ENCODE measurements at regions of chr1 and their contacts with region 1.

Region 1: DNA sequence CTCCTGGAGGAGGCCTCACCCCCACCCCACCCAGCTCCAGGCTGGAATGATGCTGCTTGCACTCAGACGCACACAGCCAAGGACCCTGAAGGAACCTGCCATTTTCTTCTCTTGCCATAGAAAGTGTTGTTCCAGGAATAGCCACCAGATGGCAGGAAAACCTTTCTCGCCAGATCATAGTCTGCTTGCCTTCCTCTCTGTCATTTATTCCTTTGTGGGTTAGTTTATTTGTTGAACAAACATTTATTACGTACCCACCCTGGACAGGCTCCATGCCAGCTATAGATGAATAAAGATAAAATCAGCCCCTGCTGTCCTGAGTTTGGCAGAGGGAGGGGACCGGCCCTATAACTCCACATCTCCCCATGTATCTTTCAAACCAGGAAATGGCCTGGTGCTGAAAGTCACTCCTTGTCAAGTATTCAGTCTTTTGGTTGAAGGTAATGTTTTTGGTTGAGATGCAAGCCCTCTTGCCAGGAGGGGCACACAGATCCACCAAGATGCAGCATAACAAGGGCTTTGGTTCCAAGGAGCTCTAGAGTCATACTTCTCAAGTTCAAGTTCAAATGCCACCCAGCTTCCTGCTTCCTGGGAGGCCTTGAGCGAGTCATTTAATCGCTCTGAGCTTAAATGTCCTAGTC is 7.0 kb upstream of the KCNC4 start:
- DNase-seq: peak; percentile 40 to 63
- ATAC-seq: peak; percentile 60 to 83; a peak in 4 of 6 replicates
- H3K4me3 ChIP-seq: no peak overlapping the region
- H3K27ac ChIP-seq: peak overlapping the region in 1 of 2 experiments; percentile 32; a peak in 2 of 6 replicates
- H3K4me1 ChIP-seq: peaks cover 11% of the 10 kb centered on the region
- CTCF ChIP-seq: peak; percentile 77
- EP300 ChIP-seq: no peak
- POLR2A ChIP-seq: no peak
- RAD21 ChIP-seq: peak; percentile 78 to 86

Region 2: GRCh38 chr1:110190282-110190929 is 12.7 kb before region 1 on chr1:
- CTCF ChIA-PET with region 1: interaction called, 40 read pairs
- POLR2A ChIA-PET with region 1: no interaction called
- DNase-seq: no peak
- ATAC-seq: no peak
- H3K4me3 ChIP-seq: no peak overlapping the region
- H3K27ac ChIP-seq: no peak overlapping the region
- H3K4me1 ChIP-seq: no peaks in the 10 kb centered on the region
- CTCF ChIP-seq: no peak
- EP300 ChIP-seq: no peak
- POLR2A ChIP-seq: no peak
- RAD21 ChIP-seq: no peak

Region 3: DNA sequence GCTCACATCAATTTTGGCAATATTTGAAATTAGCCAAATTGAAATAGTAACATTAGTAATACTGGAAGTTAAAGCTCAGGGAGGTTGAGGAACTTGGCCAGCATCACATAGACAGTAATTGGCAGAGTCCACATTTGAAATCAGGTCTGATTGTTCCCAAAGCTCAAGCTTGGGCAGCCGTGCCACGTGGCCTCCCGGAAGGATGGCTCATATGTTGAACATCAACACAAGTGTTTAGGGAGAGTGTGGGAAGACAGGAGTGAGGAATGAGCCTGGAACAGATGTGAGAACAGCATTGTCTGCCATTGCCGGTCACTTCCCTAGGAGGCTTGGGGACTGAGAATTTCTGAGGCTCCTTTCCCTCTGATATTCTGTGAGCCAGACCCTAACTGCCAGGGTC is 95.8 kb after region 1 on chr1:
- CTCF ChIA-PET with region 1: interaction called, 37 read pairs
- POLR2A ChIA-PET with region 1: no interaction called
- DNase-seq: no peak
- ATAC-seq: no peak
- H3K4me3 ChIP-seq: no peak overlapping the region
- H3K27ac ChIP-seq: no peak overlapping the region
- H3K4me1 ChIP-seq: no peaks in the 10 kb centered on the region
- CTCF ChIP-seq: no peak
- EP300 ChIP-seq: no peak
- POLR2A ChIP-seq: no peak
- RAD21 ChIP-seq: no peak

Region 4: DNA sequence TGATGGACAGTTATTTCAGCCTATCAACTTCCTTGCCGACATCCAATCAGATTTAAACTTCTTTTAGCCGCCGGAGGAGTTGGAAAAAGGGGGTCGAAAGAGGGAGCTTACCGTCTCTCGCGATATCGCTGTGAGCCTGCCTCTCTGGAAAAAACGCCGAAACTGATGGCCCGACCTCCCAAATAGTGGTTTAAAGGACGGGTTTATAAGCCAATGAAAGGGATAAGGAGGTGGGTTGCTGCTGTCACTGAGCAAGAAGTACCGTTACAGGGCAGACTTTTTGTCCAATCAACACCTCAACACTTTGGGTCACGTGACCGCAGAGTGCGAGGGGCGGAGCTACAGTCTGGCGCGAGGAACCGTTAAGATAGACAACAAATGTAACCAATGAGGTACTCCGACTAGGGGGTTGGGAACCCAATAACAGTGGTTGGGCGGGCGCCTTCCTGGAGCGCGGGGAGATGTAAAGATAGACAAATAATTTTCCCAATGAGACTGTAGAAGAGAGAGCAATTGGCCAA is 135.8 kb after region 1 on chr1 and contains the start of gene RBM15:
- CTCF ChIA-PET with region 1: interaction called, 36 read pairs
- POLR2A ChIA-PET with region 1: interaction called, 14 read pairs
- DNase-seq: peak; percentile 89 to 100
- ATAC-seq: peak; percentile 75 to 87
- H3K4me3 ChIP-seq: peak within 1 kb of the TSS; percentile 91
- H3K27ac ChIP-seq: peak within 1 kb of the TSS; percentile 96 to 99
- H3K4me1 ChIP-seq: peaks cover 58% of the 10 kb centered on the region
- CTCF ChIP-seq: no peak
- EP300 ChIP-seq: no peak
- POLR2A ChIP-seq: no peak
- RAD21 ChIP-seq: no peak
- polyA plus RNA-seq, gene RBM15: 14.0 and 15.0 TPM in 2 replicates

Region 5: GRCh38 chr1:110407260-110408210 is 204.4 kb after region 1 on chr1 and contains the start of gene LAMTOR5:
- CTCF ChIA-PET with region 1: interaction called, 11 read pairs
- POLR2A ChIA-PET with region 1: no interaction called
- DNase-seq: peak; percentile 61 to 94
- ATAC-seq: peak; percentile 95 to 96
- H3K4me3 ChIP-seq: peak within 1 kb of the TSS; percentile 98
- H3K27ac ChIP-seq: peak within 1 kb of the TSS; percentile 98 to 99
- H3K4me1 ChIP-seq: peaks cover 14% of the 10 kb centered on the region
- CTCF ChIP-seq: no peak
- EP300 ChIP-seq: no peak
- POLR2A ChIP-seq: peak; percentile 69
- RAD21 ChIP-seq: peak; percentile 31 to 49; a peak in 3 of 5 replicates
- polyA plus RNA-seq, gene LAMTOR5: 256 and 314 TPM in 2 replicates

Region 6: GRCh38 chr1:110412576-110412975 is 209.4 kb after region 1 on chr1:
- CTCF ChIA-PET with region 1: interaction called, 11 read pairs
- POLR2A ChIA-PET with region 1: no interaction called
- DNase-seq: peak; percentile 57 to 63
- ATAC-seq: peak; percentile 91
- H3K4me3 ChIP-seq: no peak overlapping the region
- H3K27ac ChIP-seq: peak overlapping the region in 1 of 2 experiments; percentile 58; a peak in 1 of 6 replicates
- H3K4me1 ChIP-seq: peaks cover 10% of the 10 kb centered on the region
- CTCF ChIP-seq: peak; percentile 75
- EP300 ChIP-seq: no peak
- POLR2A ChIP-seq: no peak
- RAD21 ChIP-seq: peak; percentile 82 to 86